ENCODE measurements at regions of chr16 and their contacts with region 1.

Region 1: DNA sequence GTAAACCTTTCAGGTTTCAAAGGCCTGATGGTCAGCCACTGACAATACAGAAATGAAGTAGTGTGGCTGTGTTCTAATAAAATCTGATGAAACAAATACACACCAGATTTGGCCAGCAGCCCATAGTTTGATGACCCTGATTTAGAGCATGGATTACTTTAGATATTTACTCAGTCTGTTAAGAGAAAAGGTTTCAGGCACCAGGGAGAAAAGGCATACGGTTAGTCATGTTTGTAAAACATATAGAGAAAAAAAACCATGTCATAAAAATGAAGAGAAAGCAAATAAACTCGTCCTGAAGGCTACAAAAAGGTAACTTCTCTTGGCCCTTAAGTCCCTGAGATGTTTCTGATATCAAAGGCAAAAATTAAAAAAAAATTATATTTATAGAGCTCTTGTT is 112.1 kb downstream of the ADAMTS18 start:
- DNase-seq: no peak
- ATAC-seq: no peak

Region 2: DNA sequence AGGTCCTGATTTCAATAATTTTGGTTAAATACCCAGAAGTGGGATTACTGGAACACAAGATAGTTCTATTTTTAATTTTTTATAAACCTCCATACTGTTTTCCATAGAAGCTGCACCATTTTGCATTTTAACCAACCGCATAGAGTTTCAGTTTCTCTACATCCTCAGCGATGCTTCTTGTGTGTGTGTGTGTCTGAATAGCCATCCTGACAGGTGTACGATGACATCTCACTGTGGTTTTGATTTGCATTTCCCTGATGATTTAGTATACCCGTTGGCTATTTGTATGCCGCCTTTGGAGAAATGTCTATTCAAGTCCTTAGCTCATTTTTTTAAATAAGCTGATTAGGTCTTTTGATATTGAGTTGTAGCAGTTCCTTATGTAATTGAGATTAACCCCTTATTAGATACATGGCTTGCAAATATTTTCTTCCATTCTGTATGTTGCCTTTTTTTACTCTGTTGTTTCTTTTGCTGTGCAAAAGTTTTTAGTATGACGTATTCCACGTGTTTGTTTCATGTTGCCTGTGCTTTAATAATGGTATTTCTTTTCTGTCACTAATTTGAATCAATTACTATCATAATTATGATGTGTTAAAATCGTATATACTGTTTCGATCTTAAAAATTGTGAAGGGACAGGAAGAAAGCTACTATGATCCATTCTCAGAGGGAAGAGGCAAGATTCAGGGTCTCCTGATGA is 359.0 kb before region 1 on chr16:
- intact Hi-C with region 1: no loop called
- DNase-seq: no peak
- ATAC-seq: no peak

Region 3: GRCh38 chr16:77376358-77376757 is 53.6 kb after region 1 on chr16:
- intact Hi-C with region 1: loop called in 1 of 2 experiments (anchors 2 kb)
- DNase-seq: no peak
- ATAC-seq: no peak

Region 4: DNA sequence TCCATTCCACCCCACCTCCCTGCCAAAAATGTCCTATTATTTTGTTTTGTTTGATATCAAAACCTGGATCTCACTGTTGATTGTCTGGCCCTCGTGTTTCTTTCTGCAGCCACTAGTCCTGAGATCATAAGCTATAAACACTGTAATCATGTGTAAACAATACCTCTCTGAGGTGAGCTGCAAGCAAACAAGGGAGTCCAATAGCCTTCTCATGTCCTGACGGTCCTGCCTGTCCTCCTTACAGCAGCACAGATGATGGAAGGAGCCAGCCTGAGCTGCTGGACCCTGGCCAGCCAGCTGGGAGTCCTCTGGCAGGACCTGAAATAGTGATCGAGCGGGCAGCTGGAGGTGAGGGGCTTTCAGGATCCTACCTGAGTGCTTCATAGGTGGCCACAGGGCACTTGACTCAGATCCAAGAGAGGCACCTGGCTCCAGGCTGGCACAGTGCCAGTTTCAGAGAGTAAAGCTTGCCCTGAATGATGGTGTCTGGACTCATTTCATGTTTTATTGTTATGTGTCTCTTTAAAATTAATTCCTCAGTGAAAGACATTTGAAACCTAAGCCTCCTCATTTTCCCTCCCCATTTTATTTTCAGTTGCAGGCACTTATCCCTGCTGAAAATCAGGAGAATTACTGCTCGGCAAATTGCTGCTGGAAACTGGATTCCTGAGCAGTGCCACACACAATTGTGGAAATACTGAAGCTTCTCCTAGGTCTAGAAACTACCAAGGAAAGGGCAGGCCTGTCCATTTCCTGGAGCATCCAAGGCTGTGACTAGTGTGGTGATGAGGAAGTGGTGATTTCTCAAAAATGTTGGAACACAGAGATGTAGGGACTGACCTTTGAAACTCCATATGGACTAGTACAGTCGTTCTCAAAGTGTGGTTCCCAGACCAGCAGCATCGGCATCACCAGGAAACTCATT is 128.1 kb after region 1 on chr16:
- intact Hi-C with region 1: no loop called
- DNase-seq: no peak
- ATAC-seq: no peak

Measured in left cardiac atrium (tissue), 4 donors.